Common myeloid progenitor, CD34-positive (primary cell): ENCODE measurements at regions of chr4 and their contacts with region 1.

Region 1: GRCh38 chr4:8917868-8918783 is 46.5 kb upstream of the HMX1 start:
- DNase-seq: peak; percentile 53 to 75 (median 73)
- H3K4me3 ChIP-seq: no peak overlapping the region
- H3K27ac ChIP-seq: no peak overlapping the region
- H3K4me1 ChIP-seq: no peaks in the 10 kb centered on the region
- H3K27me3 ChIP-seq: peaks cover 0 to 28% (median 2%) of the 10 kb centered on the region in 5 experiments

Region 2: DNA sequence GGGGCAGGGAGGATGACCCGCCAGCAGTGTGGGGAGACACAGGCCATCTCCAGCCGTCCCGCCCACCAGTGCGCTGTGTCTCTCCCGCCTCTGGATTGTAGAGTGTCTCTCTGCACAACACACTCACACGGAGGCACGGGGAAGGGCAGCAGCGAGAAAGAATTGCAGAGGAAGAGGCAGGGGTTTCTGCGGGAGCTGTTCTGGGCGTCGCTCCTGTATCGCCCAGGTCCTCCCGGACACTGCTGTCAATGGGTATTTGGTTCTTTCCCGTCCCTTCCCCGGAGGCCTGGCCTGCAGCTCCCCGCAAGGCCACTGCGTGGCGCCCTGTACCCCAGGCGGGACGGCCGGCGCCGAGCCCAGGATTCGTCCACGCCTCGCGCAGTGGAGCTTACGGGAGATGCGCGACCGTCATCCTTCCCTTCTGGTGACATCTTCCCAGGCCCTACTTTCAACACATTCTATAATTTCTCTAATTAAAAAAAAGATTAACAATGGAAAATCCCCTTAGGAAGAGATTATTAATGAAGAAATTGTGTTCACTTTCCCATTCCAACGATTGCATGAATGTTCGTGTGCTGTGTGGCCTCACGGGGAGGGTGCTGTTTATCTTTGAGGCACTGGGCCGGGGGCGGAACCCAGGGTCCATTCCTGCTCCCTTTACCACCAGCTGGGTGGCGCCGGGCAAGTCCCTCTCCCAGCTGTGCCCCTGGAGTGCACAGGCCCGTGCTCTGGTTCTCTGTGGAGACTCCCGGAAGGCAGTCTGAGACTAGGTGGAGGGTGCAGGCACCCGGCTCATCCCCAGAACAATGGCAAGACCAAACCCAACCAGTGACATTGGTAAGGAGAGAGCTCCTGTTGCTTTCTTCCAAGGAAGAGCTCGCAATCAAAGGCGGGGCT is 229.8 kb before region 1 on chr4:
- CTCF ChIA-PET with region 1: interaction called, 11 read pairs
- POLR2A ChIA-PET with region 1: no interaction called
- DNase-seq: peak; percentile 8 to 27 (median 9)
- H3K4me3 ChIP-seq: no peak overlapping the region
- H3K27ac ChIP-seq: no peak overlapping the region
- H3K4me1 ChIP-seq: no peaks in the 10 kb centered on the region
- H3K27me3 ChIP-seq: peaks cover 0 to 61% (median 16%) of the 10 kb centered on the region in 5 experiments